HCT116 (cell line): ENCODE measurements at regions of chr4 and their contacts with region 1.

Region 1: DNA sequence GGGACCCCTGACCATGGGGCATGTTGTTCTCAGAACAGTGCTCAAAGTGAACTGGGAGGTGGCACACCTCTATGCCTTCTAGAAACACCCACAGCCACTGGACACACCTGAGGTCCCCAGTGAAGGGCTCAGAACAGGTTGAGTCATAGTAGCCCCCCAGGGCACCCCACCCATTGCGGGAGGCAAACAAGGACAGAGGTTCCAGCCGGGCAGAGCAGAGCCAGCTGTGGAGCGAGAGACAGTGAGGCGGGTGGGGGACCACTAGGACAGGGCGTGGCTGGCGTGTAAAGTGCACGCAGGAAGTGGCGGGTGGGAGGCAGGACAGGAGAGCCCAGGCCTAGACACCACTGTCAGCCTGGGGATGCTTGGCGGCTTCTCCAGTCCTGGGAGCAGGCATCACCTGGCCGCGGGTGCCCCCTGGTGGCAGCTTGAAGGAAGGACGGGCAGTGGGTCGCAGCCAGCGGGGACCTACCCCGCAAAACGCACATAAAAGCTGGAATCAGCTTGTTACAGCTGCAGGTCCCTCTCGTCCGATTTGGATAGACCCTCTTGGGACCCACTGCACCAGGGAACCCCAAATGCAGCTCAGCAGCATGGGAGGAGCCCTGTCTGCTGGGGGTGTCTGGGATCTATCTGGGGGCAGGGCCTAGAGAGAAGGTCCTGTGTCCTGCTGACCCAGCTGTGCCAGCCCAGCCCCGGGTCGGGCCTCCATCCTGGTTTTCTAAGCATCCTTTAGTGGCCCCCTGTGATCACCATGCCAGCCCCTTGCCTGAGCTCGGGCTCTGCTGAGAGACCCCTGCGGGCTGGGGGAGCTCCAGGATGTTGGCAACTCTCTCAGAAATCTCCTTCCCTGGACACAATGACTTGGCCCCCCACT is 57.6 kb downstream of the WFS1 start:
- DNase-seq: peak; percentile 48
- ATAC-seq: peak; percentile 84
- H3K4me3 ChIP-seq: no peak overlapping the region
- H3K27ac ChIP-seq: no peak overlapping the region
- H3K4me1 ChIP-seq: peaks cover 8 to 16% of the 10 kb centered on the region in 2 experiments
- H3K27me3 ChIP-seq: no peaks in the 10 kb centered on the region
- CTCF ChIP-seq: peak; percentile 87 to 90 (median 87)
- POLR2A ChIP-seq: no peak
- RAD21 ChIP-seq: peak; percentile 96

Region 2: DNA sequence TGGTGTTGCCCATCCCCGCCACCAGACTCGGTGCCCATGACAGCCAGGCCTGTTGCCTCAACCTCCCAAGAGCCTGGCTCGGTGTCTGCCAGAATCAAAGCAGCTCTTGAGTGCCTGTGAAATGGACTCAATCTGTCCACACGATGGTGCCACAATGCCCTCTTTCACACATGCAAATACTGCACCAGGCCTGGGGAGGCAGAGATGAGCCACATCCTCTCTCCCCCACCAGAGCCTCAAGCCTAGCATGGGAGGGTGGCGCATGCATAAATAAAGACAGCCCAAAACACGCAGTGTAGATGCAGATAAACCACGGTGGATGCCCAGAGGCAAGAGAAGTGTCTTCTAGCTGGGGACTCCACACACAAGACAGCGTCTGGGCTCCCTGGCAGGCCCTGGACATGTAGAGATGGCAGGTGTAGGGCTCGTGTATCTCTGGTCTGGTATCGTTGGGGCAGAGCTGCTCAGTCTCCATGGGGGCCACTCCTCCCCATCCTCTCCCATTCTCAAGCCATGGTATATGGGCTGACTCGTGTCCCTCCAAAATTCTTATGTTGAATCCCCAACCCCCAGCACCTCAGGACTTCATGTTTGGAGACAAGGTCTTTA is 192.6 kb before region 1 on chr4:
- CTCF ChIA-PET with region 1: interaction called, 10 read pairs
- POLR2A ChIA-PET with region 1: no interaction called
- RAD21 ChIA-PET with region 1: interaction called, 3 to 6 read pairs
- intact Hi-C with region 1: loop called (anchors 5 kb)
- DNase-seq: peak; percentile 51
- ATAC-seq: peak; percentile 99
- H3K4me3 ChIP-seq: no peak overlapping the region
- H3K27ac ChIP-seq: no peak overlapping the region
- H3K4me1 ChIP-seq: no peaks in the 10 kb centered on the region
- H3K27me3 ChIP-seq: 0 out of 2 replicates have a peak, but pooled peaks cover 3% of the 10 kb centered on the region
- CTCF ChIP-seq: peak; percentile 63 to 93 (median 69)
- POLR2A ChIP-seq: no peak
- RAD21 ChIP-seq: peak; percentile 57

Region 3: GRCh38 chr4:6264225-6264540 is 63.1 kb before region 1 on chr4:
- CTCF ChIA-PET with region 1: interaction called, 81 read pairs
- POLR2A ChIA-PET with region 1: no interaction called
- RAD21 ChIA-PET with region 1: interaction called, 15 to 22 read pairs
- intact Hi-C with region 1: loop called (anchors 1 kb)
- DNase-seq: no peak
- ATAC-seq: peak; percentile 93
- H3K4me3 ChIP-seq: no peak overlapping the region
- H3K27ac ChIP-seq: no peak overlapping the region
- H3K4me1 ChIP-seq: peaks cover 4 to 5% of the 10 kb centered on the region in 2 experiments; a peak in 3 of 4 replicates
- H3K27me3 ChIP-seq: peaks cover 7% of the 10 kb centered on the region; the same call in 1 of the 2 replicates
- CTCF ChIP-seq: peak; percentile 67 to 90 (median 78)
- POLR2A ChIP-seq: no peak
- RAD21 ChIP-seq: peak; percentile 94

Region 4: GRCh38 chr4:6362896-6363295 is 35.6 kb after region 1 on chr4:
- CTCF ChIA-PET with region 1: interaction called, 4 read pairs
- POLR2A ChIA-PET with region 1: no interaction called
- RAD21 ChIA-PET with region 1: no interaction called
- intact Hi-C with region 1: loop called (anchors 1 kb)
- DNase-seq: no peak
- ATAC-seq: peak; percentile 49; the same call in 1 of the 2 replicates
- H3K4me3 ChIP-seq: no peak overlapping the region
- H3K27ac ChIP-seq: no peak overlapping the region
- H3K4me1 ChIP-seq: no peaks in the 10 kb centered on the region
- H3K27me3 ChIP-seq: peaks cover 10% of the 10 kb centered on the region; the same call in 1 of the 2 replicates
- CTCF ChIP-seq: no peak
- POLR2A ChIP-seq: no peak
- RAD21 ChIP-seq: no peak

Region 5: GRCh38 chr4:6500481-6501140 is 173.3 kb after region 1 on chr4:
- CTCF ChIA-PET with region 1: no interaction called
- POLR2A ChIA-PET with region 1: no interaction called
- RAD21 ChIA-PET with region 1: no interaction called
- intact Hi-C with region 1: no loop called
- DNase-seq: no peak
- ATAC-seq: no peak
- H3K4me3 ChIP-seq: no peak overlapping the region
- H3K27ac ChIP-seq: no peak overlapping the region
- H3K4me1 ChIP-seq: no peaks in the 10 kb centered on the region
- H3K27me3 ChIP-seq: no peaks in the 10 kb centered on the region
- CTCF ChIP-seq: no peak
- POLR2A ChIP-seq: no peak
- RAD21 ChIP-seq: no peak

Region 6: GRCh38 chr4:6688879-6689505 is 361.7 kb after region 1 on chr4:
- CTCF ChIA-PET with region 1: no interaction called
- POLR2A ChIA-PET with region 1: no interaction called
- RAD21 ChIA-PET with region 1: no interaction called
- intact Hi-C with region 1: loop called (anchors 10 kb)
- DNase-seq: peak; percentile 75
- ATAC-seq: peak; percentile 73
- H3K4me3 ChIP-seq: peak overlapping the region; percentile 34 to 39
- H3K27ac ChIP-seq: peak overlapping the region; percentile 94
- H3K4me1 ChIP-seq: peaks cover 39 to 57% of the 10 kb centered on the region in 2 experiments
- H3K27me3 ChIP-seq: no peaks in the 10 kb centered on the region
- CTCF ChIP-seq: no peak
- POLR2A ChIP-seq: no peak
- RAD21 ChIP-seq: no peak